Activated T-helper 1 cell treated with anti-CD3 and anti-CD28 coated beads, Interleukin-12 subunit alpha, Interleukin-12 subunit beta, Interleukin-2, Interleukin-4 antibody, amounts not matched to agents 30 ng/mL and 10 ng/mL and 1 ng/mL, durations not matched to agents 14 hours and 24 hours and 36 hours (primary cell): ENCODE measurements at regions of chr3 and their contacts with region 1.

Region 1: GRCh38 chr3:47282424-47283192 is at the starts of genes KIF9 and KLHL18:
- DNase-seq: peak; percentile 95
- H3K4me3 Mint-ChIP-seq: peak within 1 kb of the TSS; percentile 98
- H3K27ac Mint-ChIP-seq: peak within 1 kb of the TSS; percentile 100
- H3K4me1 Mint-ChIP-seq: peaks cover 45% of the 10 kb centered on the region
- H3K27me3 Mint-ChIP-seq: no peaks in the 10 kb centered on the region
- total RNA-seq, gene KIF9: 3.3 and 3.4 TPM in 2 replicates
- total RNA-seq, gene KLHL18: 48.3 and 48.7 TPM in 2 replicates

Region 2: DNA sequence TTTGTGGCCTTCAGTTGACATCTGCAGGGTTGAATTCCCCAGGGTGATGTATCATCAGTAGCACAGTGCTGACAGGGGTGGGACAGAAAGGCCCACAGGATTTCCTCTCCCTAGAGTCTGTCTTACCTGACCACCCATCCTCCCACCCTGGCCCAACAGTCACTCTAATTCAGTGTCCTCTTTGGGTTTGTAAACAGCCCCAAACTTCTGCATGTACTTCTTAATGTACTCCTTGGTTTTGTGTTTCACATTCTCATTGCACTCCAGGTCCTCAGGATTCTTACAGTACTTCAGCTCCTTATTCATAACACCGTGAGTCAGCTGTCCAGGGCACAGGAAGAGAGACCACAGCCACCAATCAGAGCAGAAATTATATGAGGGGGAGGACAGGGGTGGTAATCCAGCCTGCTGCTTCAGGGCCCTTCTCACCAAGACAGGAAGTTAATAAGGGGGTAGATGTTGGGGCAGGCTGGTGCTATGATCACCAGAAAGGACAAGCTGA is 265.6 kb before region 1 on chr3:
- intact Hi-C with region 1: loop called (anchors 5 kb)
- DNase-seq: no peak
- H3K4me3 Mint-ChIP-seq: peak overlapping the region; percentile 59
- H3K27ac Mint-ChIP-seq: peak overlapping the region; percentile 87
- H3K4me1 Mint-ChIP-seq: peaks cover 57% of the 10 kb centered on the region
- H3K27me3 Mint-ChIP-seq: no peaks in the 10 kb centered on the region

Region 3: GRCh38 chr3:47164007-47164881 is 118.4 kb before region 1 on chr3 and contains the start of gene SETD2:
- intact Hi-C with region 1: loop called (anchors 1 kb)
- DNase-seq: peak; percentile 75
- H3K4me3 Mint-ChIP-seq: peak within 1 kb of the TSS; percentile 99
- H3K27ac Mint-ChIP-seq: peak within 1 kb of the TSS; percentile 100
- H3K4me1 Mint-ChIP-seq: peaks cover 53% of the 10 kb centered on the region
- H3K27me3 Mint-ChIP-seq: peaks cover 2% of the 10 kb centered on the region
- total RNA-seq, gene SETD2: 41.2 and 45.7 TPM in 2 replicates

Region 4: DNA sequence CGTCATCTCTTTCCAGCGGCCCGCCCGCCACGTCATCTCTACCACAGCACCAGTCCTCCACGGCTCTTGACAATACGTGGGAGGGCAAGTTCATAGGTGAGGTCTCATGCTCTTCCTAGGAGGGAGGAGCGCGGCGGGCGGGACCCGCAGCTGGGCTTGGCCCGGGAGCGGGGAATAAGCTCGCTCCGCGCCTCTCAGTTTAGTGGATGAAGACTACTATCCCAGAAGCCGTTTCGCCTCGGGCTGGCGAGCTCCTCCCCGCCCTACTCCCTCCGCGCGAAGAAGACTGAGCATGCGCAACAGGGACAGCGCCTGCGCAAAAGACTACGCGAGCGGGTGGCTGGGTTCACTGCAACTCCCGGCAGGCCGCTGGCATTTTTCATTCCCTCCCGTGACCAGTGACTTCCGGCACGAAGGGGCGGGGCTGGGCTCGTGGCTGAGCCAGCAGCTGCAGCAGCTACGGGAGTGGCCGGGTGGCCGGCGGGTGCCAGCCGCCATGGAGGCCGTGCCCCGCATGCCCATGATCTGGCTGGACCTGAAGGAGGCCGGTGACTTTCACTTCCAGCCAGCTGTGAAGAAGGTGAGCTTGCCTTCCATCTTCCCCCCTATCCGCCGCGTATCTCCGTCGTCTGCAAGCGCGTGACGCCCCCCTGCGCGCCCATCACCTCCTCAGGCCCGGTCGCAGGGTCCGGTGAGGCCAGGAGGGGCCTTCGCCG is 98.2 kb after region 1 on chr3 and contains the start of gene PTPN23:
- intact Hi-C with region 1: loop called (anchors 1 kb)
- DNase-seq: peak; percentile 99
- H3K4me3 Mint-ChIP-seq: peak within 1 kb of the TSS; percentile 100
- H3K27ac Mint-ChIP-seq: peak within 1 kb of the TSS; percentile 100
- H3K4me1 Mint-ChIP-seq: peaks cover 43% of the 10 kb centered on the region
- H3K27me3 Mint-ChIP-seq: no peaks in the 10 kb centered on the region
- total RNA-seq, gene PTPN23: 33.7 and 35.1 TPM in 2 replicates

Region 5: DNA sequence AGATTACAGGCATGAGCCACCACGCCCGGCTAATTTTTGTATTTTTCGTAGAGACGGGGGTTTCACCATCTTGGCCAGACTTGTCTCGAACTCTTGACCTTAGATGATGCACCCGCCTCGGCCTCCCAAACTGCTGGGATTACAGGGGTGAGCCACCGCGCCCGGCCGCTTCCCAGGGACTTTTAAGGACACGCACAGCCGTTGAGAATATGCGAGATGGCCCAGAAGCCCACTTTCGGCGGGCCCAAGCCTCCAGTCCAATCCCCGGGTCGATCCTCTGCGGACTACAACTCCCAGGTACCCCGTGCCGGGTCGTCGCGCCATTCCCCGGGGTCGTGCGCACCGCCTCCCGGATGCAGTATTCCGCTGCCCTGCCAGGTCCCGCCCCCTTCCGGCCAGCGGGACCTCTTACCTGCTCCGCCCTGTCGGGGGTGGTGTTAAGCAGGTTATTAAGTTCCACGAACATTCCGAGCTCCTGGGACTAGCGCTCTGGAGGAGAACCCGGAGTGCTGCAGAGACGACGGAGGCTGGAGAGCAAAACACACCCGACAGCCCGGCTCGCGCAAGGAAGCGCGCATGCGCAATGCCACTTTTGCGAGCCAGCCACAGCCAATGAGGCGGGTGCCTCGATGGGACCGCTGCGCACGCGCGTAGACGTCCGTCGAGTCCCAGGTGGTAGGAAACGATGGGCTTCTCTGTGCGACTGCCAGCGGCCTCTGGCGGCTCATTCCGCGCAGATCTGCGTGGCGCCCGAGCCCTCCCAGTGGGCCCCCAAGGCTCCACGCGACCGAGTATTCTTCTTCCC is 230.7 kb after region 1 on chr3 and contains the start of gene ELP6:
- intact Hi-C with region 1: loop called (anchors 2 kb)
- DNase-seq: peak; percentile 95
- H3K4me3 Mint-ChIP-seq: peak within 1 kb of the TSS; percentile 97
- H3K27ac Mint-ChIP-seq: peak within 1 kb of the TSS; percentile 98
- H3K4me1 Mint-ChIP-seq: peaks cover 18% of the 10 kb centered on the region
- H3K27me3 Mint-ChIP-seq: no peaks in the 10 kb centered on the region
- total RNA-seq, gene ELP6: 44.7 and 47.9 TPM in 2 replicates